ENCODE measurements at regions of chr18 and their contacts with region 1.

Region 1: GRCh38 chr18:2971741-2972552 is 41.0 kb downstream of the LPIN2 start:
- DNase-seq: peak; percentile 81
- H3K4me3 Mint-ChIP-seq: peak overlapping the region; percentile 73
- H3K27ac Mint-ChIP-seq: peak overlapping the region; percentile 96
- H3K4me1 Mint-ChIP-seq: peaks cover 92% of the 10 kb centered on the region
- H3K27me3 Mint-ChIP-seq: no peaks in the 10 kb centered on the region

Region 2: DNA sequence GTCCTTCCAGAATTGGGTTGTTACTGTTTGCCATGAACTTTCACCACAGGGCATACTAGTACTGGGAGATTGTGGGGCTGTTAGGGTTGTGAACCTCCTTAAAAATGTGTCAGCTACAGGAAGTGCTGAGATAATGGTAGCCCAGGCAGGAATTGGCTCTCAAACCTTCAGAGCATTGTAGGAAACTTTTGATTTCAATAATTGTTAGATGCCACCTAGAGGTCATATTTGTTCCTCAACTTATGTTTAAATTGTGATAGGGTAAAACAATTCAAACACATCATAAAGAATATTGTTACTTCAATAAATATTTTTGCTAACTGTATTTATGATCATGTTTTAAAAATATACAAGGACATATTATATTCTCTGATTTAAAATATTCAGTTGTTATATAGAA is 1472.7 kb before region 1 on chr18:
- CTCF ChIA-PET with region 1: no interaction called
- DNase-seq: no peak
- H3K4me3 Mint-ChIP-seq: no peak overlapping the region
- H3K27ac Mint-ChIP-seq: no peak overlapping the region
- H3K4me1 Mint-ChIP-seq: no peaks in the 10 kb centered on the region
- H3K27me3 Mint-ChIP-seq: no peaks in the 10 kb centered on the region

Region 3: GRCh38 chr18:2958819-2959298 is 13.1 kb before region 1 on chr18:
- CTCF ChIA-PET with region 1: interaction called, 20 read pairs
- DNase-seq: peak; percentile 74
- H3K4me3 Mint-ChIP-seq: peak overlapping the region; percentile 72
- H3K27ac Mint-ChIP-seq: peak overlapping the region; percentile 99
- H3K4me1 Mint-ChIP-seq: peaks cover 96% of the 10 kb centered on the region
- H3K27me3 Mint-ChIP-seq: no peaks in the 10 kb centered on the region

Measured in activated naive CD4-positive, alpha-beta T cell treated with anti-CD3 and anti-CD28 coated beads, Interleukin-2, amount 10 ng/mL, durations not matched to agents 7 days and 5 days (primary cell).